Motor neuron (in vitro differentiated cells): ENCODE measurements at regions of chr4 and their contacts with region 1.

Region 1: DNA sequence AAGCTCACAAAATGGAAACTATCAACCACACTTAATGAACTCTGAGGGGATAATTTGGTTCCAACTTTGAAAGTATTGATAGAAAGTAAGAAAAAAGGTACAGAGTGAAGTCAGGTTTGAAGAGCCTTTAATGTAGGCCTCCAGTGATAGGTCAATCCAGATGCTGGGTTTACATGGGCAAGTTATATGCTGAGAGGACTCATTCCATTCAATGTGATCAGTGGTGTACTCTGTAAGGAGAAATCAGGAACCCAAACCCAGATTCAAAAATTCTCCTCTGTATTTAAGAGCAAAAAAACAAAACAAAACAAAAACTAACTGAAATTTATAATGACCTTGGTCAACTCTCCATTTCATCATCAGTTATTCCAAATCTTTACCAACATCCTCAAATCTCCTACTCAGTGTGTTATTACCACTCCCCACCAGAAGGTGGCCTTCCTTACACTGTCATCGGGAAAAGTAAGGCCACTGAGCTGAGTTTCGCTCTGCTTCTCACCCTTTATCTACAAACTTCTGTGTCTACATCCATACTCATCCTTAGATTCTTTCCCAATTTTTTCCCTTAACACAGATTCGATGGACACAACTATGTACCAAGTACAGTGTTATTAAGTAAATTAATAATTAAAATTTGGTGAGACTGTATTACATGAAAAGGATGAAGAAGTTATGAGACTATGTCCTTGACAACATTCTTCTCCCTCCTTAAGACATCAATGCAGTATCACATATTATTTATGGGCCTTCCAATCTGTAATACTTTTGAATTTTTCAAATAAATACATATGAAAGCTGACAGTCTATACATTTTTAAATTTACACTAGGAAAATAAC is 88.3 kb downstream of the ZAR1 start:
- ATAC-seq: peak; percentile 41 to 94 (median 74)
- H3K4me3 ChIP-seq: no peak overlapping the region
- H3K27ac ChIP-seq: no peak overlapping the region
- H3K4me1 ChIP-seq: no peaks in the 10 kb centered on the region

Region 2: DNA sequence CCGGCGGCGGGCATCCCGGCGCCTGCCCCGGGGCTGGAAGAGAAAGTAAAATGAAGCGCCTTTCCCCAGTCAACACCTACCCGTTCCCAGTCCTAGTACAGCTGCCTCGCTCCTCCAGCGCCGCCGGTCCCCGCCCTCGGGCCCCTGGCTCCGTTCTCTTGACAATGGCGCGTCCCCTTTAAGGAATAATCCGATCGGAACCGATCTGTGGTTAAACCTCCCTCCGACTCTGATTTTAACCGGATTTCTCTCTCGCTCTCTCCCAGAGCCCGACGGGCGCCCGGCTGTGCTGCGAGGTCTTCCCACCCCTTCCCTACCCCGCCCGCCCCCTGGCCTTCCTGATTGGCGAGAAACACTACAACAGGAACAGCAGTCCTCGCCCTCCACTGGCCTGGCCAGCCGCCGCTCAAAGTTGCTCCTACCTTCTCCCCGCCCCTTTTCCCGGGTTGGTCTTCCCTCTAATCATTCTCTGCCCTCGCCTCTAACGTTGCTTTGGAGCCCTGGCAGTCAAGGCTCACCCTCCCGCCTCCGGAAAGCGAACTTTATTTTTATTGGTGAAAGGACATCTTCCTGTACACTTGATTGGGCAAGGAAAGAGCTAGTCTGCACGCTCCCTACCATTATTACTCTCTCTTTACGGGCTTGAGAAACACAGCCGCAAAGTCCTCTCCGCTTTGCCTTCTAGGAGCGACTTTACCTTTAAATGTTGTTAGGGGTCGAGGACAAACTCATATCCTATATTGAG is 201.8 kb after region 1 on chr4 and contains the start of gene FRYL:
- in situ Hi-C with region 1: loop called in 1 of 9 experiments (anchors 25 kb)
- ATAC-seq: peak; percentile 84 to 94 (median 92)
- H3K4me3 ChIP-seq: peak within 1 kb of the TSS; percentile 65 to 84 (median 70)
- H3K27ac ChIP-seq: peak within 1 kb of the TSS; percentile 77 to 82
- H3K4me1 ChIP-seq: peaks cover 7 to 14% of the 10 kb centered on the region in 2 donors
- total RNA-seq, gene FRYL: 26.0 to 91.8 (median 37.9) TPM

Region 3: DNA sequence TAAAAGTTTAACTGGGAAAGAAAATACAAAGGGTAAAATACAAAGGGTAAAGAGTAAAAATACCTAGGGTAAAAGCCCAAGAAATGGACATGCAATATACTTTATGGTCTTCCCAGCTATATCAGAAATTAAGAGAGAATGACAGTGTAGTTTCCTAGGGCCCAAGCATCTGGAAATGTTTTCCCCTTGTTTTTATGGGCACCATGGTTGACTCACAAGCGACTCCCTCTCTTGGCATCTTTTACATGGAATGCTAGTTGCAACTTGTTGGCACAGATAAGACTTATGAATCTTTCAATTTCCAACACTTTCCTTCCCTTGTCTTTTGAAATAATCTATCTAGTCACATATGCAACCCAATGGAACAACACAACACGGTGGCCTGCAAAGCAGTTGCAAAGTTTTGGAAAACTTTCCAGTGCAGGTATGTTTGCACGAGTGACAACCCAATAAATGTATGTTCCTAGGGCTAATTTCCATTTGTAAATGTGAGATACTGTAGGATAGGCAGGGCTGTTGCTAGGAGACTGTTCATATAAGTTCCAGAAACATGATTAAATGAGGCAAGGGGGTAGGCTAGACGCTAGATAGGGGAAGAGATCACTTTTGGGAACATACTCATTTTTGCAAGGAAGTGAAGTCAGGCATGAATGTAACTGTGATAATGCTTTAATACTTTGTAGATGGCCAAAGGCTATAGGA is 371.3 kb after region 1 on chr4:
- in situ Hi-C with region 1: loop called in 7 of 9 experiments (anchors 10 to 25 kb)
- ATAC-seq: peak in 3 of 8 experiments; percentile 53 to 71 (median 66)
- H3K4me3 ChIP-seq: no peak overlapping the region
- H3K27ac ChIP-seq: no peak overlapping the region
- H3K4me1 ChIP-seq: no peaks in the 10 kb centered on the region